Upper lobe of right lung (tissue), 1 donor: ENCODE measurements at regions of chr11 and their contacts with region 1.

Region 1: DNA sequence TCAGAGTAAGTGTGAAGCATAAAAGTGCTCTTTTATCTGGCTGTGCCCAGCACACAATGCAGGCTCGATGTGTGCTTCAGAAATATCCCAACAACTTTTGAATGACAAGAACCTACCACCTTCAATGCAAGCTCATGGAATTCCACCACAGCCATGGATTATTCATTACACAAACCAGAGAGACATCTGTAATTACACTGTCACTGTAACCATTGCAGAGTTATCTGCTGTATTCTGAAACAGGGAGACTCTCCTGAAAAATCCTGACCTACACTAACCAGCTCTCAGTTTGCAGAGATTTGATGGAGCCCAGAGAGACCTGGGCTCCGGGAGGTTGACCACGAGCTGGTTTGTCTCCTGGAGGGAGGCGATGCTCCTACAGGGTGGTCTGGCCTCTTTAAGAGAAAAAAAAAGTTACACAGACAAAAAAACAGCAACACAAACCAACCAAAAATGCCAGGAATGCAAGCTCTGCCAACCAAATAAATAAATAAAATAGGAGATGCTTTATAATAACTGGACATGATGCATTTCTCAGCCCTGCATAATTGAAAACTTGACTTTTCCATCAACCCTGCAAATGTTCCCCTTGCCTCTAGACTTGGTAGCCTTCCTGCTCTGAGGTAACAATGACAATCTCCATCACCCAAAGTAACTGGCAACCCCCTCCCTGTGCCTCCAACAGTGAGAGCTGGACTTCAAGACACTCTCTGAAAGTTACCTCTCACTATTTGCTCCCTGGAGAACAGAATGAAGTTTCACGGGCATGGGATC is 69.7 kb downstream of the ETS1 start:
- DNase-seq: no peak
- ATAC-seq: no peak
- H3K4me3 ChIP-seq: peak overlapping the region; percentile 74
- H3K27ac ChIP-seq: peak overlapping the region; percentile 94
- H3K4me1 ChIP-seq: peaks cover 43% of the 10 kb centered on the region
- H3K27me3 ChIP-seq: no peaks in the 10 kb centered on the region
- CTCF ChIP-seq: no peak

Region 2: GRCh38 chr11:128552783-128553661 is 35.4 kb after region 1 on chr11:
- intact Hi-C with region 1: loop called (anchors 5 kb)
- DNase-seq: no peak
- ATAC-seq: peak; percentile 52
- H3K4me3 ChIP-seq: no peak overlapping the region
- H3K27ac ChIP-seq: no peak overlapping the region
- H3K4me1 ChIP-seq: peaks cover 39% of the 10 kb centered on the region
- H3K27me3 ChIP-seq: no peaks in the 10 kb centered on the region
- CTCF ChIP-seq: no peak